Aorta (tissue), 5 donors: ENCODE measurements at regions of chr7 and their contacts with region 1.

Region 1: GRCh38 chr7:141701489-141702046 is 398 bp downstream of the DENND11 start:
- DNase-seq: peak; percentile 66 to 78
- ATAC-seq: peak; percentile 57
- H3K4me3 ChIP-seq: peak overlapping the region; percentile 99 to 100
- H3K27ac ChIP-seq: peak overlapping the region; percentile 23 to 95
- H3K4me1 ChIP-seq: peaks cover 3 to 10% of the 10 kb centered on the region in 2 donors
- H3K27me3 ChIP-seq: no peaks in the 10 kb centered on the region

Region 2: DNA sequence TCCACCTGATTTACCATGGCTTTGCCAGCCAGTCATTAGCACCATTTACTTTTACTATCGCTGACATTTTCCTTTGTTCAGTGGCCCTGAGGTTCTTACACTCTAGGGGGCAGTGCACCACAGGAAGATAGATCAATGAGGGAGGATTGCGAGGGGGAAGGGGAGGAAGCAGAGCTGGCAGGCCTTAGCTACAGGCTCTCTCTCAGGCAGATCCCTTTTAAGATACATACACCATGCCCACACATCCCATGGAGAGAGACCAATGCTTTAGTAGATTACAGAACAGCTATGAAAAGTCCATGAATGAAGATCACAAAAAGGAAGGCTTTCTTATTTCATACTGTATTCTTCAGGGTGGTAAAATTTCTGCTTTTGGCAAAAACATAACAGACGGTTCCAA is 47.0 kb before region 1 on chr7:
- intact Hi-C with region 1: loop called in 1 of 2 experiments (anchors 5 kb)
- DNase-seq: peak; percentile 34 to 68
- ATAC-seq: peak; percentile 76
- H3K4me3 ChIP-seq: no peak overlapping the region
- H3K27ac ChIP-seq: peak overlapping the region in 1 of 2 donors; percentile 5
- H3K4me1 ChIP-seq: no peaks in the 10 kb centered on the region
- H3K27me3 ChIP-seq: no peaks in the 10 kb centered on the region